ENCODE measurements at regions of chr10 and their contacts with region 1.

Region 1: GRCh38 chr10:120824881-120825309 is 26.3 kb upstream of the WDR11 start:
- DNase-seq: peak in 1 of 2 experiments; percentile 68
- H3K4me3 ChIP-seq: no peak overlapping the region
- H3K27ac ChIP-seq: no peak overlapping the region
- H3K4me1 ChIP-seq: peaks cover 1 to 7% (median 5%) of the 10 kb centered on the region in 4 experiments; a peak in 5 of 7 replicates
- H3K27me3 ChIP-seq: peaks cover 0 to 4% (median 0%) of the 10 kb centered on the region in 4 experiments; a peak in 2 of 7 replicates
- CTCF ChIP-seq: peak; percentile 69 to 92 (median 82)
- EP300 ChIP-seq: no peak
- POLR2A ChIP-seq: no peak
- RAD21 ChIP-seq: peak; percentile 68 to 77

Region 2: GRCh38 chr10:120805014-120805812 is 19.7 kb before region 1 on chr10:
- CTCF ChIA-PET with region 1: interaction called, 12 read pairs
- POLR2A ChIA-PET with region 1: interaction called, 3 read pairs
- DNase-seq: no peak
- H3K4me3 ChIP-seq: no peak overlapping the region
- H3K27ac ChIP-seq: no peak overlapping the region
- H3K4me1 ChIP-seq: peaks cover 0 to 6% (median 3%) of the 10 kb centered on the region in 4 experiments; a peak in 3 of 7 replicates
- H3K27me3 ChIP-seq: peaks cover 0 to 1% (median 0%) of the 10 kb centered on the region in 4 experiments; a peak in 1 of 7 replicates
- CTCF ChIP-seq: peak; percentile 33 to 60 (median 38); a peak in 3 of 4 replicates
- EP300 ChIP-seq: no peak
- POLR2A ChIP-seq: no peak
- RAD21 ChIP-seq: peak; percentile 11 to 43; a peak in 2 of 4 replicates

Region 3: DNA sequence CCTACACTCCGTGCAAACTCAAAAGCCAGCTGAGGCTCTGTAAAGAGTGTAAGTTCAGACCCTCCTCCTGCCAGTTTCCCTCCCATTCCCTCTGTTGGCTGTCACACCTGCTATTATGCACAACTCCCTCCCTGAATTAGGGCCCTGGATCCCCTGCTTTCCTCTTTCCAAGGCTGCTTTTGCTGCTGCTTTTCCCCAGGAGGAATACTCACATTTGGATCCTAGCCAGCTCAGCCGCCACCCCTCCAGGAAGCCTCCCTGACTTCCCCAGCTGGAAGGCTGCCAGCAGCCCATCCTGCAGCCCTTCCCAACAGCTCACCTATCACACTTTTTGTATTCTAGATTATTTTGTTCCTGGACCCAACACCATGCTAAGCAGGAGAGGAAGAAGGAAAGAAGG is 14.6 kb before region 1 on chr10:
- CTCF ChIA-PET with region 1: interaction called, 17 read pairs
- POLR2A ChIA-PET with region 1: interaction called, 3 read pairs
- DNase-seq: no peak
- H3K4me3 ChIP-seq: no peak overlapping the region
- H3K27ac ChIP-seq: no peak overlapping the region
- H3K4me1 ChIP-seq: 0 out of 7 replicates have a peak, but pooled peaks cover 0 to 5% (median 0%) of the 10 kb centered on the region in 4 experiments
- H3K27me3 ChIP-seq: no peaks in the 10 kb centered on the region
- CTCF ChIP-seq: no peak
- EP300 ChIP-seq: no peak
- POLR2A ChIP-seq: no peak
- RAD21 ChIP-seq: no peak

Region 4: DNA sequence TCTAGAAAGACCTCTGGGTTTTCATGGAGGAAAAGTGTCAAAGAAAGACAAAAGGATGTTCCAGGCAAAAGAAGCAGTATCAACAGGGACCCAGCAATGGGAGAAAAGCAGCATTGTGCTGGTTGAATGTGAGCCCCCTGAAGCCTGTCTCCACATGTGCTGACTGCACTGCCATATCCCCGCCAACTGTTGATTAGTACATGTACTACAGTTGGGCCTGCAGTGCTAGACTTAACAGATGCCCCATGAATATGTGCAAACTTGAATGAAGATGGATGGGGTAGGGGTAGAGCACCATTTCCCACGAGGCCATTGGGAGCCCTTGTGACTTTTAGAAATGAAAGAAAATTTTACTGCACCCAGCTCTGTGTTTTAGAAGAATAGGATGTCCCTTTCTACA is 10.7 kb after region 1 on chr10:
- CTCF ChIA-PET with region 1: interaction called, 34 read pairs
- POLR2A ChIA-PET with region 1: interaction called, 3 read pairs
- DNase-seq: no peak
- H3K4me3 ChIP-seq: no peak overlapping the region
- H3K27ac ChIP-seq: no peak overlapping the region
- H3K4me1 ChIP-seq: peaks cover 0 to 5% (median 0%) of the 10 kb centered on the region in 4 experiments; a peak in 2 of 7 replicates
- H3K27me3 ChIP-seq: no peaks in the 10 kb centered on the region
- CTCF ChIP-seq: no peak
- EP300 ChIP-seq: no peak
- POLR2A ChIP-seq: no peak
- RAD21 ChIP-seq: no peak

Region 5: GRCh38 chr10:120841522-120842189 is 16.8 kb after region 1 on chr10:
- CTCF ChIA-PET with region 1: interaction called, 34 read pairs
- POLR2A ChIA-PET with region 1: no interaction called
- DNase-seq: no peak
- H3K4me3 ChIP-seq: no peak overlapping the region
- H3K27ac ChIP-seq: no peak overlapping the region
- H3K4me1 ChIP-seq: peaks cover 0 to 5% (median 0%) of the 10 kb centered on the region in 4 experiments; a peak in 2 of 7 replicates
- H3K27me3 ChIP-seq: no peaks in the 10 kb centered on the region
- CTCF ChIP-seq: no peak
- EP300 ChIP-seq: no peak
- POLR2A ChIP-seq: no peak
- RAD21 ChIP-seq: no peak